ENCODE measurements at regions of chr10 and their contacts with region 1.

Region 1: DNA sequence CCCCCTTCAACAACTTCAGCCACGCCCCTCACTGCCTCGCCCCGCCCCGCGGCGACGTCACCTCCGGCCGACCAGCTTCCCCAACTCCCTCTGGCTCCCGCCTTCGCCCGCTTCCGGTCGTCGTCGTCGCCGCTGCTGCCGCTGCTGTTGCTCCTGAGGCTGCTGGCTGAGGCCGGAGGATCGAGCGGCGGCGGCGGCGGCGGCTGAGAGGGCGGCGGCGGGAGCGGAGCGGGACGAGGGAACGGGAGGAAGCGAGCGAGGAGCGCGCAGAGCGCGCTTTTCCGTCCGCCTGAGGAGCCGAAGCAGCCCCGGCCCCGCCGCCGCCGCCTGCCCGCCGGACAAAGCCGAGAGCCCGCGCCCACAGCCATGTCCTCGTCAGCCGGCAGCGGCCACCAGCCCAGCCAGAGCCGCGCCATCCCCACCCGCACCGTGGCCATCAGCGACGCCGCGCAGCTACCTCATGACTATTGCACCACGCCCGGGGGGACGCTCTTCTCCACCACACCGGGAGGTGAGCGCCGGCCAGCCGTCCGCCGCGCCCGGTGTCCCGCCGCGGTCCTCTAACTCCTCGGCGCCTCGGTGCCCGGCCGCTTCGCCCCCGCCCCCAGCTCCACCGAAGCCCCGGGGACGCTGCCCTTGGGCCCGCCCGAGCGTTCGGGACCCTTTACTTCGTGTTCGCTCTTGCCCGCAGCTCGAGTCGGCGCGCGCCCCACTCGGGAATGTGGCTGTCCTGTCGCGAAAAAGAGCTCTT is at the start of gene EIF4EBP2:
- DNase-seq: peak; percentile 95 to 100 (median 98)
- ATAC-seq: peak; percentile 97
- H3K4me3 ChIP-seq: peak within 1 kb of the TSS; percentile 63 to 77
- H3K4me3 Mint-ChIP-seq: peak within 1 kb of the TSS; percentile 97
- H3K27ac ChIP-seq: peak within 1 kb of the TSS; percentile 73 to 76
- H3K27ac Mint-ChIP-seq: peak within 1 kb of the TSS; percentile 93
- H3K4me1 ChIP-seq: peaks cover 23% of the 10 kb centered on the region
- H3K4me1 Mint-ChIP-seq: peaks cover 46% of the 10 kb centered on the region
- H3K27me3 ChIP-seq: no peaks in the 10 kb centered on the region
- H3K27me3 Mint-ChIP-seq: no peaks in the 10 kb centered on the region
- CTCF ChIP-seq: no peak
- total RNA-seq, gene EIF4EBP2: 22.4 TPM

Region 2: DNA sequence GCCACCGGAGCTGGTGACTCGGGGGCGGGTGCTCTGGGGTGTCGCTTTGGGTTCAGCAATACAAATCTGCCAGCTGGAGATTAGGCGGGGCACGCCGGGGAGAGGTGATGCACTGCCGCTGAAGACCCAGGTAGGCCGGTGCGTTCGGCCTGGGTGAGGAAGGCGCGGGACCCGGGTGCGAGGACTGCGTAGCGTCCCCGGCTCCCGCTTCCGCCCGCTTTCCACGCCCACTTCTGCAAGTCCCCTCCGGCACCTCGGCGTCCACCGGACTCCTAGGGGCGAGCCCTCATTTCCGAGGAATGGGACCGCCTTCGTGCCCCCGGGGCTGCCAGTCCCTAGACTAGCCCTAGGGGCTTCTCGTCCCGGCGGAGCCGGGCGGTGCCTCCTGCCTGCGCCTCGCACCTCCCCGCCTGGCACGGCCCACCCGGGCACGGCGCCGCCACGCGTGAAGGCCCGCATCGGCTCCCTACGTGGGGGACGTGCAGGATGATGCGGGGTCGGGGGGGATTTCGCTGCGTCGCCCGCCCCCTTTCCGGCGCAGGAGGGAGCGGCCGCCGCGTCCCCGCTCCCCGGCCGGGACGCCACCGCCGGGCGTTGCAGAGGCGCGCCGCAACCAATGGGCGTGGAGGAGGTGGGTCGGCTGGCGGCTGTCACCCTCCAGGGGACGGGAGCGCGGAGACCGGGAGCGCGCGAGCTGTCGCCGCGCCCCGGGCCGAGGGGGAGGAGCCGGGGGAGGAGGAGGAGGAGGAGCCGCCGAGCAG is 1085.9 kb before region 1 on chr10:
- CTCF ChIA-PET with region 1: no interaction called
- POLR2A ChIA-PET with region 1: no interaction called
- intact Hi-C with region 1: loop called in 1 of 2 experiments (anchors 10 kb)
- DNase-seq: peak; percentile 81 to 96 (median 90)
- ATAC-seq: peak; percentile 89
- H3K4me3 ChIP-seq: peak overlapping the region; percentile 92 to 99
- H3K4me3 Mint-ChIP-seq: peak overlapping the region; percentile 95
- H3K27ac ChIP-seq: peak overlapping the region; percentile 89 to 92
- H3K27ac Mint-ChIP-seq: peak overlapping the region; percentile 89
- H3K4me1 ChIP-seq: peaks cover 32% of the 10 kb centered on the region
- H3K4me1 Mint-ChIP-seq: peaks cover 38% of the 10 kb centered on the region
- H3K27me3 ChIP-seq: no peaks in the 10 kb centered on the region
- H3K27me3 Mint-ChIP-seq: no peaks in the 10 kb centered on the region
- CTCF ChIP-seq: no peak

Region 3: DNA sequence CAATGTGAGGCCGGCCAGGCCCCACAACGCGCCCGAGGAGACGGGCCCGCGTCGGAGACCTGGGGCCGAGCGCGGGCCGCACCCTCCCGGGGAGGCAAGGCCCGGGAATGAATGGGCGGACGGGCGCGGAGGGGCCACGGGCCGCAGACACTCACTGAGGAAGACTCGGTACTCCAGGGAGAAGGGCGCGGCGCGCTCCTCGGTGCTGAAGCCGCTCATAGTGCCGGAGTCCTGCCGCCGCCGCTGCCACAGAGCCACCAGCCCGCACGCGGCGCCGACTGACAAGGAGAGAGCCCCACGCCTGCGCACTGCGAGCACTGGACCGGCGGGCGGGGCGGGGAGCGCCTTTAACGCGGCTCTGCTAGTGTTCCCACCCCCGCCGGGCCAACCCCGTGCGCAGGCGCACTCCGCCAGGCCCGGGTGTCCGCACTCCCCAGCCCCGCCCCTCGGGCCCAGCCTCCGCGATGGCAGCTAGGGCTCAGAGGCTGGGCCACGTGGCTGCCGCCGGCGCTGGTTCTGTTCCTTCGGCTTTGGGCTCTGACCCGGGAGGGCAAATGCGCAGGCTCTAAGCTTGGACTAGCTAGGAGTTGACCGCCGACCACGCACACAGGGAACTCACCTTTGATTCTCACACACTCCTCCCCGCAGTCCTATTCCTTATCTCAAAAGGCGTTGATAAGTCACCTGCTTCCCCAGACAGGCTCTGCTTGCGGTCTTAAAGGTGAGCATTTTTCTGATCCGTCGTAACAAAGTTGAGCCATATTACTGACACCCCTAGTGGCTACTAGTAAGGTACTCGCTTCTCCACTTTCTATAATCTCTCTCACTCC is 170.9 kb before region 1 on chr10 and contains the start of gene PPA1:
- CTCF ChIA-PET with region 1: no interaction called
- POLR2A ChIA-PET with region 1: interaction called, 13 read pairs
- intact Hi-C with region 1: loop called (anchors 1 kb)
- DNase-seq: peak; percentile 98 to 100 (median 99)
- ATAC-seq: peak; percentile 93
- H3K4me3 ChIP-seq: peak within 1 kb of the TSS; percentile 87 to 90
- H3K4me3 Mint-ChIP-seq: peak within 1 kb of the TSS; percentile 89
- H3K27ac ChIP-seq: peak within 1 kb of the TSS; percentile 74 to 80
- H3K27ac Mint-ChIP-seq: peak within 1 kb of the TSS; percentile 93
- H3K4me1 ChIP-seq: peaks cover 9% of the 10 kb centered on the region
- H3K4me1 Mint-ChIP-seq: peaks cover 36% of the 10 kb centered on the region
- H3K27me3 ChIP-seq: no peaks in the 10 kb centered on the region
- H3K27me3 Mint-ChIP-seq: peaks cover 4% of the 10 kb centered on the region
- CTCF ChIP-seq: no peak
- total RNA-seq, gene PPA1: 79.9 to 83.1 TPM

Region 4: DNA sequence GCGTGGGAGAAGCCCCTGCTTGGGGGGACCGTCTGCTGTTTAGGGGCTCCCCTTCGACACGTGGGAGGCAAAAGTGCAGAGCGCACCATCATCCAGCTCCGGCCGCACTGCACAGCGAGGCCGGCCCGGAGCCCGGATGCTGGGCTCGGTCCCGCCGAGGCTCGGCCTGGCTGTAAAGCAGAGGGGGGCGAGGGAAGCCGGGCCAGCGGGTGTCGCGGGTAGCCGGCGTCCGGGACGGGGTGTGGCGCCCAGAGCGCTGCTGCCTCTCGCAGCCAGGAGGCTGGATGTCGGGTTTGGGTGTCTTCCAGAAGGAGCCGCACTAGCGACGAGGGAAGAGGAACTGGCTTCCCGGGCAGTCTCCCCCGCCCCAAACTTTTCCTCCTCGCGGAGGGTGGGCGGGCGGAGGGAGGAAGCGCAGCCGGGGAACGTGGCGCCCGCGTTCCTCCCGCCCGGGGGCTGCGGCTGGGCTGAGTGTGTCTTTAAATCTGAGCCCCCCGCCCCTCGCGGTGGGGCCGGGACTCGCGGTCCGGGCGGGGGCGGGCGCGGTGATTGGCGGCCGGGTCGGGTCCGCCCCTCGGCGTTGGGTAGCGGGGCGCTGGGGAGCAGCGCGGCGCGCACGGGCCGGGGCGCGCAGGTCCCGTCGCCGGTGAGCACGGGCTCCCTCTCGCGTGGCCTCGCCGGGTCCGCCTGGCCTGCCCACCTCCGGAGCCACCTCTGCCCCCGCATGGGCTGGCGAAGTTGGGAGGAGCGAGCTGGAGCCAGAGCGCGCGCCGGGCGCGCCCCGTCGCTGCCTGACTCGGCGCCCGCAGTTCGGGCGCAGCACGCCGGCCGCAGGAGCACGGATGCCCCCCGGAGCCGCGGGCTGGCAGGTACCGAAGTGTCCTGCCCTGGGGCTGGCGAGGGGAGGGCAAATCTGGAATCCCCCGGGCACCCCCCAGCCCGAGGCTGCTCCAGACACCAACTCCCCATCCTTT is 74.3 kb after region 1 on chr10 and contains the start of gene PALD1:
- CTCF ChIA-PET with region 1: no interaction called
- POLR2A ChIA-PET with region 1: interaction called, 5 read pairs
- intact Hi-C with region 1: loop called (anchors 1 to 2 kb)
- DNase-seq: peak in 3 of 9 experiments; percentile 30 to 56 (median 45)
- ATAC-seq: peak; percentile 19
- H3K4me3 ChIP-seq: peak within 1 kb of the TSS; percentile 47 to 48
- H3K4me3 Mint-ChIP-seq: peak within 1 kb of the TSS; percentile 80
- H3K27ac ChIP-seq: no peak within 1 kb of the TSS
- H3K27ac Mint-ChIP-seq: no peak within 1 kb of the TSS
- H3K4me1 ChIP-seq: peaks cover 43% of the 10 kb centered on the region
- H3K4me1 Mint-ChIP-seq: peaks cover 45% of the 10 kb centered on the region
- H3K27me3 ChIP-seq: no peaks in the 10 kb centered on the region
- H3K27me3 Mint-ChIP-seq: peaks cover 2% of the 10 kb centered on the region
- CTCF ChIP-seq: no peak
- total RNA-seq, gene PALD1: 0.08 TPM in 1 of 2 experiments, not detected in the other

Region 5: DNA sequence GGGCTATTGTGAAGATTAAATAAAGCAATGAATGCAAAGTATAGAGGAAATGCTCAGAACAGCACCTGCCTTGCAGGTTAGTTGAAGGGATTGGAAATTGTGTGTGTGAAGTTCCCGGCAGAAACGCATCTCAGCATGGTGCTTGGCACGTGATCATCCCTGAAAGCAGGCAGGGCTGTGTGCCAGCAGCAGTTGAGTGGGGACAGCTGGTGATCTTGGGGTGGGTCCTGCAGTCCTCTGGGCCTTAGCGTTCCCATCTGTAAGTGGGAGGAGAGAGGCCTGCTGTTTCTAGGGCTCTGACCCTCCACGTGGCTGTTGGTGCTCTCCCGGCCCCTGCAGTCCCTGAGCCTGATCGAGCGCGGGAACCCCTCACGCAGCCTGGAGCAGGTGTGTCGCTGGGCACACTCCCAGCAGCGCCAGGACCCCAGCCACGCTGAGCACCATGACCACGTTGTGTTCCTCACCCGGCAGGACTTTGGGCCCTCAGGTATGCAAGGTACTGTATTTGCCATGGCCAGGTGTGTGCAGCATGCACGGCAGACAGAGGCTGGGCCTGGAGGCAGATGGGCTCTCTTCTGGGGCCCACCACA is 325.6 kb after region 1 on chr10:
- CTCF ChIA-PET with region 1: no interaction called
- POLR2A ChIA-PET with region 1: no interaction called
- intact Hi-C with region 1: no loop called
- DNase-seq: no peak
- ATAC-seq: no peak
- H3K4me3 ChIP-seq: no peak overlapping the region
- H3K4me3 Mint-ChIP-seq: no peak overlapping the region
- H3K27ac ChIP-seq: no peak overlapping the region
- H3K27ac Mint-ChIP-seq: no peak overlapping the region
- H3K4me1 ChIP-seq: no peaks in the 10 kb centered on the region
- H3K4me1 Mint-ChIP-seq: no peaks in the 10 kb centered on the region
- H3K27me3 ChIP-seq: no peaks in the 10 kb centered on the region
- H3K27me3 Mint-ChIP-seq: no peaks in the 10 kb centered on the region
- CTCF ChIP-seq: no peak

Region 6: DNA sequence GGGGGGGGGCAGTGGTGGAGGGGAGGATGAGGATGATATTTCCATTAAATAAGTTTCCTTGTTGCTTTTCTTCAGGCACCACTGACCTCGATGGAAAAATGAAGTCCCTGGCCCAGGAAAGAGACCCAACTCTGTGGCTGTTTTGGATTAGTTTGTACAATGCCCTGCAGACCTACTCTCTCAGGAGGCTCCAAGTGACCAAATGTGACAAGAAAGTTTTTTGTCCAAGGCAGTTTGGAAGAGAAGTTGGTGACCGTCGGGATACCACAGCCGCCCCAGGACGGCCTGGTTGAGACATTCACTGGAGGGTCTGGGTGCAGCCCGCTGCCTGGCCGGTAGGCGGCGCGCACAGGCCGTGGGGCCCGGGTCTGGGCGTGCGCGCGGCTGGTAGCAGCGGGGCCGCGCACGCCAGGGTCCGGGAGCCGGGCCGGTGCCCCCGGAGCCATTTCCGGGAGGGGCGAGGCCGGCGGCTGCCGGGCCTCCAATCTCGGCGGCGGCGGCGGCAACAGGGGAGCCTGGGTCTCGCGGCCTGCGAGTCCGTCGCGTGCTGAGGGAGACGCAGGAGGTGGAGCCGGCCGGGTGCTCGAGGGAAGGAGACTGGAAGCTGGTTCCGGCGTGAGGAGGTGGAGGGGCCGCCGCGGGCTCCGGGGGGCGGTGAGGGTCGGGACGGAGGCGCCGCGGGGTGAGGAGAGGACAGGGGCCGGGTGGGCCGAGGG is 411.5 kb after region 1 on chr10 and contains the start of gene SGPL1:
- CTCF ChIA-PET with region 1: no interaction called
- POLR2A ChIA-PET with region 1: no interaction called
- intact Hi-C with region 1: loop called in 1 of 2 experiments (anchors 5 kb)
- DNase-seq: peak; percentile 70 to 93 (median 85)
- ATAC-seq: peak; percentile 94
- H3K4me3 ChIP-seq: peak within 1 kb of the TSS; percentile 48 to 75
- H3K4me3 Mint-ChIP-seq: peak within 1 kb of the TSS; percentile 93
- H3K27ac ChIP-seq: peak within 1 kb of the TSS; percentile 26 to 65
- H3K27ac Mint-ChIP-seq: peak within 1 kb of the TSS; percentile 94
- H3K4me1 ChIP-seq: peaks cover 19% of the 10 kb centered on the region
- H3K4me1 Mint-ChIP-seq: peaks cover 32% of the 10 kb centered on the region
- H3K27me3 ChIP-seq: no peaks in the 10 kb centered on the region
- H3K27me3 Mint-ChIP-seq: no peaks in the 10 kb centered on the region
- CTCF ChIP-seq: peak; percentile 95
- total RNA-seq, gene SGPL1: 14.5 to 15.5 TPM